ENCODE measurements at regions of chr5 and their contacts with region 1.

Region 1: GRCh38 chr5:76576996-76577395 is 46.2 kb downstream of the F2RL2 start:
- DNase-seq: no peak
- H3K4me3 ChIP-seq: no peak overlapping the region
- H3K27ac ChIP-seq: no peak overlapping the region
- H3K4me1 ChIP-seq: no peaks in the 10 kb centered on the region
- H3K27me3 ChIP-seq: no peaks in the 10 kb centered on the region
- CTCF ChIP-seq: no peak

Region 2: GRCh38 chr5:76041863-76042262 is 535.1 kb before region 1 on chr5:
- CTCF ChIA-PET with region 1: no interaction called
- POLR2A ChIA-PET with region 1: no interaction called
- intact Hi-C with region 1: no loop called
- DNase-seq: no peak
- H3K4me3 ChIP-seq: no peak overlapping the region
- H3K27ac ChIP-seq: no peak overlapping the region
- H3K4me1 ChIP-seq: no peaks in the 10 kb centered on the region
- H3K27me3 ChIP-seq: peaks cover 3% of the 10 kb centered on the region; the same call in 1 of the 2 replicates
- CTCF ChIP-seq: no peak

Region 3: DNA sequence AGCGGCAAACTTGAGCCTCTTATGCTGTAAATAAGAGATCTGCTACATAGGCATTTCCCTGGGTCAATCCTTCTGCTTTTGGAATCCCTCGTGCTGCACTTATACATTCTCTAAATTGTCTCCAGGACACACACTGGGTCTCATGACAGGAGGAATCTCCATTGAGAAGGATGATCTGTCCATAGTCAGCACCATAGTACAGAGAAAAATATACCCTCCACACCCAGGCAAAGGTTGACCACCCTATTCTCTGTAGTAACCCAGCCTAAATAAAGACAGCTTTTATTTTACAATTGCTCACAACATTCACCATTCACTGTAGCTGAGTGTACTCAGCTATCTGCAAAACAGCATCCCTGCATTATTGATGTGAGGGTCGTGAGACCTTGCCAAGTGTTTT is 382.7 kb before region 1 on chr5:
- CTCF ChIA-PET with region 1: no interaction called
- POLR2A ChIA-PET with region 1: interaction called, 12 read pairs
- intact Hi-C with region 1: no loop called
- DNase-seq: no peak
- H3K4me3 ChIP-seq: no peak overlapping the region
- H3K27ac ChIP-seq: no peak overlapping the region
- H3K4me1 ChIP-seq: no peaks in the 10 kb centered on the region
- H3K27me3 ChIP-seq: no peaks in the 10 kb centered on the region
- CTCF ChIP-seq: no peak

Region 4: DNA sequence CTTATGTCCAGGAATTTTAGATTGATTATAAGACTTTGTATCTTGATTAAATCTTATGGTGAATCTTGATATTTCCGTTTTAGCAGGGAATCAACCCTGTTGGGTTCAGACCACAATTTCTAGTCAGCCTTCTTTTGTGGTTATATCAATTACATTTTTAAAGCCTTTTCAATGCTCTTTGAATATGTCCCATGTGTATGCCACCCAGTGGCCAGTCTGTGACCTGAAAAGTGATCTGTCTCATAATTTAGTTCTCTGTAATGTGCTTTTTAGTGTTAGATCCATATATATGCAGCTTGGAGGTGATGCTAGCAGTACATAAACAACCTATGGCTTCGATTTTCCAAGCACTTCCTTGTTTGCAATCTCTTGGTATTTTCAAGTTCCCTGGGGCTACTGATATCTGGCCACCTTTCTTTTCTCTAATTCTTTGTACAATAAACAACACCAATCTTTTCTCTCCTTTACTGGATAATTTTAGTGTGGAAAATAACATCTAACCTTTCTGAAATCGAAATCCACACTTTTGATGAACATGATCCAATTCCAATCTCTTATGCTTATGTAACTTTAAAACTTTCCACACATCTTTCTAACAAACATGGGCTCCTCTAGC is 662.2 kb after region 1 on chr5:
- CTCF ChIA-PET with region 1: no interaction called
- POLR2A ChIA-PET with region 1: no interaction called
- intact Hi-C with region 1: no loop called
- DNase-seq: peak in 1 of 2 experiments; percentile 14
- H3K4me3 ChIP-seq: no peak overlapping the region
- H3K27ac ChIP-seq: no peak overlapping the region
- H3K4me1 ChIP-seq: no peaks in the 10 kb centered on the region
- H3K27me3 ChIP-seq: no peaks in the 10 kb centered on the region
- CTCF ChIP-seq: peak; percentile 68